CD8-positive, alpha-beta T cell (primary cell): ENCODE measurements at regions of chr12 and their contacts with region 1.

Region 1: DNA sequence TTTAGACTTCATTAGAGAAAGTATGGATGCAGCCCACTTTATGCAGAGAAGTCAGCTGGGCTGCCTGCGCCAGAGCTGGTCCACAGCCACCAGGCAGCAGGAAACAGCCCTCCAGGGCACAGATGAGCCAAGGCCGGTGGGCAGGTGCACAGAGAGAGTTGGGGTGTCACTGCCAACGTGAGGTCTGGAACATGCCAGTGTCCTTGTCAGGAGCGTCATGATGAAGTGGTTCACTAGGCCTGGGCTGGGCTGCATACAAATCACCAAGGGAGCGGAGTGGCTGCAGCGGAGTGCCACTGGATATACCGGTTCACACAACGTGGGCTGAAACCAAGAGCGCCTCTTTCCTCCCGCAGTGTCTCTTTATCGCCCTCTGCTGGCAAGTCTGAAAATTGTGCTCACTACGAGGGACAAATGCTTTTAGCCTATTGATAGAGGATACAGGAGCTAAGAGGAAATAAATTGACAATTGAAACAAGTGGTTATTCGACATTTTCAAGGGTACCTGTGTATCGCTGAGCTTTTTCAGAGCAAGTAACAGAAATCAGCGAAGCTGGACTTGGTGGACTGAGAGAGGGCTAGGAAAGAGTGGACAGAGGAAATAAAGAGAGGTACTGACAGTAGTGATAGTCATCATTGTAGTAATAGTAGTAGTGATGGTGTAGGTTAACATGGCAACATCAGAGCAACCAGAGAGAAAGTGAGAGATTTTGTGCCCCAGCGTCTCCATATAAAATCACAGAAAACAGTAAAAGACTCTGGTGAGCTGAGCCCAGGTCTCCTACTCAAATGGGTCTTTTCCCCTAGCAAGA is 52.0 kb upstream of the ITPR2 start:
- DNase-seq: peak; percentile 59 to 89 (median 82)
- ATAC-seq: peak; percentile 99
- H3K4me3 ChIP-seq: peak overlapping the region; percentile 18 to 21
- H3K4me3 Mint-ChIP-seq: peak overlapping the region; percentile 70
- H3K27ac ChIP-seq: no peak overlapping the region
- H3K27ac Mint-ChIP-seq: no peak overlapping the region
- H3K4me1 ChIP-seq: no peaks in the 10 kb centered on the region
- H3K4me1 Mint-ChIP-seq: peaks cover 8% of the 10 kb centered on the region
- H3K27me3 ChIP-seq: no peaks in the 10 kb centered on the region
- H3K27me3 Mint-ChIP-seq: peaks cover 6% of the 10 kb centered on the region
- CTCF ChIP-seq: peak; percentile 98

Region 2: GRCh38 chr12:26434299-26435068 is 450.5 kb before region 1 on chr12:
- CTCF ChIA-PET with region 1: no interaction called
- POLR2A ChIA-PET with region 1: no interaction called
- intact Hi-C with region 1: loop called in 1 of 2 experiments (anchors 10 kb)
- DNase-seq: peak in 2 of 9 experiments; percentile 13 to 17
- ATAC-seq: no peak
- H3K4me3 ChIP-seq: no peak overlapping the region
- H3K4me3 Mint-ChIP-seq: no peak overlapping the region
- H3K27ac ChIP-seq: no peak overlapping the region
- H3K27ac Mint-ChIP-seq: no peak overlapping the region
- H3K4me1 ChIP-seq: no peaks in the 10 kb centered on the region
- H3K4me1 Mint-ChIP-seq: no peaks in the 10 kb centered on the region
- H3K27me3 ChIP-seq: no peaks in the 10 kb centered on the region
- H3K27me3 Mint-ChIP-seq: no peaks in the 10 kb centered on the region
- CTCF ChIP-seq: peak; percentile 19

Region 3: DNA sequence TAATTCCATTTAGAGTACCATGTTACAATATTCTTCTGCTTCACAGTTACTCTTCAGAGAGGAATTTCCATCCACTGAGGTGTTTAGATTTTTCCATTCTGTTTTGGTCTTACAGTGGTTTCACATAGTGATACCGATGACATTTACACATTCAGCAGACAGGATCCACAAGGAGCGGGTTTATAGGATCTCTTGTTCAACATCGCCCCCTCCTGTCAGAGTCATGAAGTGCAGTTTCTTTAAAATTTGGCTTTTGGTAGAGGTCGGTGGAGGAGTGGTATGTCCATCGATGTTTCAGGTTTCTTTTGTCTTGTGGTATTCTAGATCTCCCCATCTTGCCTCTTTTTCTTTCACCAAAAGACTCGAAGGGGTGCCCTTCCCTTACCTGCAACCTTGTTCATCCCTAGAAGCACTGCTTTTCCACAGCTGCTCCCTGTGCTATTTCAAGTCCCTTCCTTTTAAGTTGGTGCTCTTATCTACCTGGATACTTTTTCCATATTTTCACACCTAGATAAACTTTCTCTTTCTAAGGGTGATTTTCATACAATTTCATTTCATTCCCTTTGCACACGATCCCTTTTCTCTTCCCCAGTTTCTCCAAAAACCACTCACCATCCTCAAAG is 233.3 kb before region 1 on chr12:
- CTCF ChIA-PET with region 1: no interaction called
- POLR2A ChIA-PET with region 1: no interaction called
- intact Hi-C with region 1: no loop called
- DNase-seq: peak in 3 of 9 experiments; percentile 10 to 35 (median 28)
- ATAC-seq: no peak
- H3K4me3 ChIP-seq: no peak overlapping the region
- H3K4me3 Mint-ChIP-seq: no peak overlapping the region
- H3K27ac ChIP-seq: no peak overlapping the region
- H3K27ac Mint-ChIP-seq: no peak overlapping the region
- H3K4me1 ChIP-seq: no peaks in the 10 kb centered on the region
- H3K4me1 Mint-ChIP-seq: no peaks in the 10 kb centered on the region
- H3K27me3 ChIP-seq: no peaks in the 10 kb centered on the region
- H3K27me3 Mint-ChIP-seq: no peaks in the 10 kb centered on the region
- CTCF ChIP-seq: peak; percentile 52

Region 4: DNA sequence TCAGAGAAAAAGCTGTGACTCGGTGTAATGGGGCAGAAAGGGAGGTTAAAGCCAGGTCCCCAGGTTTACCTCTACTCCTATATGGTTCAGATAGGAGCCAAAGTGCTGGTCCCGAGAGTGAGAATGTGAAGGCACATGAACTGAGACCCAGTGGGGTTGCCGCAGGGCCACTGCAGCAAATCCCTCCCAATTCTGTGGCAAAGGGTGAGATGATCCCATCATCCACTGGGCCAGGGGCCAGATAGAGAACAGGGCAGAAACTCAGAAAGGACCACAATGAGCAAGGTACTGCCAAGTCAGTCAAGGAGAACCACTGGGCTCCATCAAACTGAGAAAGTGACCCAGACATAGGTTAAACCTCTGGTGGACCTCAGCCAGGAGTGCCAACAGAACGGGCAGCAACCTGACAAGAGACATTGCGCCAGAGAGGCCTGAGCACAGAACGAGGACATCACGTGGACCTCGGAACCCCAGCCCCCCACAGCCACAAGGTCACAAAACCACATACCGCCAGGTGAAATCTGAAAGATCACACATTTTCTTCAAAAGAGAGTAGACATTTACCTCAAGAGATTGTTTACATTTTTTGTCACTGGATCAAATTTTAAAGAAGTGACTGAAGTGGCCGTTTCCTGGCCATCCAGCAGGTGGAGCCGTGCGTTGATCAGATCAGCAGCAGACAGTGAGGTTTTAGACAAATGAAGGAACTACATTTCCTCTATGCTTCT is 31.5 kb before region 1 on chr12:
- CTCF ChIA-PET with region 1: interaction called, 18 read pairs
- POLR2A ChIA-PET with region 1: interaction called, 3 read pairs
- intact Hi-C with region 1: loop called (anchors 1 kb)
- DNase-seq: peak; percentile 55 to 83 (median 69)
- ATAC-seq: peak; percentile 98
- H3K4me3 ChIP-seq: no peak overlapping the region
- H3K4me3 Mint-ChIP-seq: no peak overlapping the region
- H3K27ac ChIP-seq: no peak overlapping the region
- H3K27ac Mint-ChIP-seq: peak overlapping the region; percentile 33
- H3K4me1 ChIP-seq: peaks cover 6% of the 10 kb centered on the region
- H3K4me1 Mint-ChIP-seq: no peaks in the 10 kb centered on the region
- H3K27me3 ChIP-seq: no peaks in the 10 kb centered on the region
- H3K27me3 Mint-ChIP-seq: peaks cover 4% of the 10 kb centered on the region
- CTCF ChIP-seq: peak; percentile 92

Region 5: GRCh38 chr12:26896913-26897312 is 11.9 kb after region 1 on chr12:
- CTCF ChIA-PET with region 1: interaction called, 10 read pairs
- POLR2A ChIA-PET with region 1: no interaction called
- intact Hi-C with region 1: no loop called
- DNase-seq: no peak
- ATAC-seq: no peak
- H3K4me3 ChIP-seq: no peak overlapping the region
- H3K4me3 Mint-ChIP-seq: no peak overlapping the region
- H3K27ac ChIP-seq: no peak overlapping the region
- H3K27ac Mint-ChIP-seq: no peak overlapping the region
- H3K4me1 ChIP-seq: no peaks in the 10 kb centered on the region
- H3K4me1 Mint-ChIP-seq: no peaks in the 10 kb centered on the region
- H3K27me3 ChIP-seq: no peaks in the 10 kb centered on the region
- H3K27me3 Mint-ChIP-seq: no peaks in the 10 kb centered on the region
- CTCF ChIP-seq: no peak